Right lobe of liver (tissue), 6 donors: ENCODE measurements at regions of chr15 and their contacts with region 1.

Region 1: DNA sequence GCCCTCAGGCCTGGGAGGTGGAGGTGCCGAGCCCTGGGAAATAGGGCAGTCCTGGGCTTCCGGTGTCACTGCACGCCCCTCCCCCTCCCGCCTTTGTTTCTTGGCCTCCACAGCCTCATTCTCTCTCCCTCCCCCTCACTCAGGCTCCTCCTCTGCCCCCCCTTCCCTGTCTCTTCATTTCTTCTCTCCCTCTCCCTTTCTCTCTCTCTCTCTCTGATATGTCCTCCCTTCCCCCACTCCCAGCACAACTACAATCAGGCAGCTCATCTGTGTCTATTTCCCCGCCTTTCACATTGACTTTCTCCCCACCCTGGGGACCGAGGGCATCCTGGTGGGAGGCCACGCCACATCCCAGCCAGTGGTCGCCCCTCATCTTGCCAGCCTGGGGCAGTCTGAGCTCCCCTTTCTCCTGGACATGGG is 40.2 kb downstream of the IDH2 start:
- DNase-seq: no peak
- ATAC-seq: peak in 1 of 4 donors; percentile 3
- H3K4me3 ChIP-seq: no peak overlapping the region
- H3K27ac ChIP-seq: peak overlapping the region; percentile 26 to 72 (median 45)
- H3K4me1 ChIP-seq: peaks cover 0 to 2% (median 0%) of the 10 kb centered on the region in 4 donors
- H3K27me3 ChIP-seq: no peaks in the 10 kb centered on the region
- CTCF ChIP-seq: no peak
- POLR2A ChIP-seq: no peak

Region 2: GRCh38 chr15:89907289-89907688 is 154.7 kb before region 1 on chr15:
- intact Hi-C with region 1: loop called in 1 of 2 experiments (anchors 10 kb)
- DNase-seq: no peak
- ATAC-seq: no peak
- H3K4me3 ChIP-seq: no peak overlapping the region
- H3K27ac ChIP-seq: no peak overlapping the region
- H3K4me1 ChIP-seq: peaks cover 0 to 11% (median 4%) of the 10 kb centered on the region in 4 donors
- H3K27me3 ChIP-seq: no peaks in the 10 kb centered on the region
- CTCF ChIP-seq: no peak
- POLR2A ChIP-seq: no peak

Region 3: GRCh38 chr15:90143166-90143655 is 81.2 kb after region 1 on chr15:
- intact Hi-C with region 1: no loop called
- DNase-seq: peak; percentile 78 to 83 (median 81)
- ATAC-seq: peak; percentile 84 to 92 (median 89)
- H3K4me3 ChIP-seq: no peak overlapping the region
- H3K27ac ChIP-seq: peak overlapping the region; percentile 38 to 63 (median 56)
- H3K4me1 ChIP-seq: peaks cover 0 to 24% (median 9%) of the 10 kb centered on the region in 4 donors
- H3K27me3 ChIP-seq: no peaks in the 10 kb centered on the region
- CTCF ChIP-seq: peak; percentile 69 to 90 (median 80)
- POLR2A ChIP-seq: no peak